Common myeloid progenitor, CD34-positive (primary cell): ENCODE measurements at regions of chr16 and their contacts with region 1.

Region 1: DNA sequence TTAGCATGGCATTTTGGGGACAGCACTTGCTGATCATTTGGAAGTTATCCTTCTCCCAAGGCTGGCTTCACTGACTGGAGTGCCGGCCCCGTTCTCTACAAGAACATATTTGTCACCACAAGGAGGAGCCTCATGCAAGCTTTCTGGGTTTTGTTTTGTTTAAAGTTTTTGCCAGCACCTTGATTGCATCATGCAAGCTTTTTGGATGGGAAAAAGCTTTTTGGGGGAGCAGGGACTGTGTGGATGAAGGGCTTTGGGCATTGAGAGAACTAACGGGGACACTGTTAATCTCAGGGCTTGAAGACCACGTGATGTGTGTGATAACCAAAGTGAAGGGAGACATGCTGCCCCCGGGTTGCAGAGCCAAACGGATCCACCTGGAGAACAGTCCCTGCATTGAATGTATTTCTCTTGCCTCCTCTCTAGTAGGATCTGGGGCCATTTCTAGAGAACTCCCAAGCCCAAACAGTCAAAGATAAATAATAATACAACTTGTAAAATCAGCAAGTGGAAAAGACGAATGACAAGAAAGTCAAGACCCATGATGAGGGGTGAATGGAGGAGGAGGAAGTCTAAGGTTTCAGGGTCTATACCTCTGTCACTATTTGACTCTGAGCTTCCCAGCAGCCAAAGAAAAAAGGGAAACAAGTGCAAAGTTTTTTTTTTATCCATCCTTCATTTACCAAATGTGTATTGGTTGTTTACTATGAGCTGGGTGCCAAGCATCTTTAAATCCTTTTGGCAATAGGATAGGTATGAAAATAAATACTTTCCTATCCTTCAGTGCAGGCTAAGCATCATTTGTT is 17.2 kb downstream of the TMEM114 start:
- DNase-seq: peak; percentile 45 to 63 (median 59)
- H3K4me3 ChIP-seq: no peak overlapping the region
- H3K27ac ChIP-seq: no peak overlapping the region
- H3K4me1 ChIP-seq: peaks cover 0 to 4% (median 3%) of the 10 kb centered on the region in 4 experiments
- H3K27me3 ChIP-seq: peaks cover 0 to 12% (median under 1%) of the 10 kb centered on the region in 5 experiments

Region 2: GRCh38 chr16:8589057-8589899 is 16.2 kb after region 1 on chr16:
- CTCF ChIA-PET with region 1: interaction called, 14 read pairs
- POLR2A ChIA-PET with region 1: no interaction called
- DNase-seq: no peak
- H3K4me3 ChIP-seq: peak overlapping the region in 2 of 7 experiments; percentile 29 to 62
- H3K27ac ChIP-seq: no peak overlapping the region
- H3K4me1 ChIP-seq: peaks cover 0 to 12% (median 6%) of the 10 kb centered on the region in 4 experiments
- H3K27me3 ChIP-seq: peaks cover 22 to 75% (median 41%) of the 10 kb centered on the region in 5 experiments

Region 3: GRCh38 chr16:8623634-8624033 is 50.5 kb after region 1 on chr16:
- CTCF ChIA-PET with region 1: no interaction called
- POLR2A ChIA-PET with region 1: no interaction called
- DNase-seq: no peak
- H3K4me3 ChIP-seq: no peak overlapping the region
- H3K27ac ChIP-seq: no peak overlapping the region
- H3K4me1 ChIP-seq: peaks cover 3 to 13% (median 9%) of the 10 kb centered on the region in 4 experiments
- H3K27me3 ChIP-seq: peaks cover 0 to 15% (median 2%) of the 10 kb centered on the region in 5 experiments

Region 4: GRCh38 chr16:8644211-8645140 is 71.4 kb after region 1 on chr16:
- CTCF ChIA-PET with region 1: interaction called, 31 read pairs
- POLR2A ChIA-PET with region 1: interaction called, 3 read pairs
- DNase-seq: peak; percentile 64 to 89 (median 82)
- H3K4me3 ChIP-seq: peak overlapping the region in 2 of 7 experiments; percentile 4 to 33
- H3K27ac ChIP-seq: peak overlapping the region in 1 of 2 experiments; percentile 38
- H3K4me1 ChIP-seq: peaks cover 0 to 28% (median 13%) of the 10 kb centered on the region in 4 experiments
- H3K27me3 ChIP-seq: no peaks in the 10 kb centered on the region

Region 5: GRCh38 chr16:8655184-8655717 is 82.1 kb after region 1 on chr16:
- CTCF ChIA-PET with region 1: interaction called, 10 read pairs
- POLR2A ChIA-PET with region 1: no interaction called
- DNase-seq: peak in 2 of 3 donors; percentile 40 to 41
- H3K4me3 ChIP-seq: no peak overlapping the region
- H3K27ac ChIP-seq: no peak overlapping the region
- H3K4me1 ChIP-seq: peaks cover 0 to 4% (median 1%) of the 10 kb centered on the region in 4 experiments
- H3K27me3 ChIP-seq: no peaks in the 10 kb centered on the region